Activated CD4-positive, alpha-beta T cell treated with anti-CD3 and anti-CD28 coated beads, Interleukin-2, amount 10 ng/mL, durations not matched to agents 24 days and 14 days (primary cell): ENCODE measurements at regions of chr4 and their contacts with region 1.

Region 1: DNA sequence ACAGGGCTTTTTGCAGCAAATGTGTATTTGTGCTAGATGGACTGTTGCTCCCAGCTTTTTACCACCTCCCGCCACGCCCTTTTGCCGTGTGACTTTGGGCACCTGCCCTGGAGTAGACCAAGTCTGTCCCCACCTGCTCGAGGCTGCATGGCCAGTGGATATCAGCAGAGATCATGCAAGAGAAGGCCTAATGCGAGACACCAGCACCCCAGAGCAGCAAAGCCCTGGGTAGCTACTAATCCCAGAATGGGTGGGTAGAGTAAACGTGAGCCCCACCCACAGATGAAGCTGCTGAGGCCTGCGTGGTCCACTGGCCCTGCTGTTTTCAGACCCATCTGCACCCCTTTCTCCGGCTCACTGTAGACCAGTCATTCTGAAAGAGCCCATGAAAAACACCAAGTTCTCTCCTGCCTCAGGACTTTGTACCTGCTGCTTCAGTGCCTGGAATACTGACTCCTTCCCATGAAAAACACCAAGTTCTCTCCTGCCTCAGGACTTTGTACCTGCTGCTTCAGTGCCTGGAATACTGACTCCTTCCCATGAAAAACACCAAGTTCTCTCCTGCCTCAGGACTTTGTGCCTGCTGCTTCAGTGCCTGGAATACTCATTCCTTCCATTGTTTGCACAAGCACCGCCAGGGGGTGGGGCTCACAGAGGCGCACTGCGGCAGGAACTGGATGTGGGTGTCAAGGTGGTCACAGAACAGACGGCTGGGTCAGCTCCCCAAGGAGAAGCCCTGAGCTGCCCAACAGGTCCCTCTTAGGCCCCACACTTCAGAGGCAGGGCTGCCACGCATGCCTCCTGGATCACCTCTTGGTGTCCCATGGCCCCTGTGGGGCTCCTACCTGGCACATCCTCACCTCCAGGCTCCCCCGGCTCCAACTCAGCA is 5.1 kb upstream of the TNIP2 start:
- DNase-seq: peak; percentile 69
- H3K4me3 Mint-ChIP-seq: no peak overlapping the region
- H3K27ac Mint-ChIP-seq: peak overlapping the region; percentile 67
- H3K4me1 Mint-ChIP-seq: peaks cover 11% of the 10 kb centered on the region
- H3K27me3 Mint-ChIP-seq: no peaks in the 10 kb centered on the region

Region 2: GRCh38 chr4:2811830-2812611 is 50.7 kb after region 1 on chr4:
- intact Hi-C with region 1: loop called (anchors 2 kb)
- DNase-seq: peak; percentile 90
- H3K4me3 Mint-ChIP-seq: peak overlapping the region; percentile 89
- H3K27ac Mint-ChIP-seq: peak overlapping the region; percentile 96
- H3K4me1 Mint-ChIP-seq: peaks cover 52% of the 10 kb centered on the region
- H3K27me3 Mint-ChIP-seq: no peaks in the 10 kb centered on the region

Region 3: DNA sequence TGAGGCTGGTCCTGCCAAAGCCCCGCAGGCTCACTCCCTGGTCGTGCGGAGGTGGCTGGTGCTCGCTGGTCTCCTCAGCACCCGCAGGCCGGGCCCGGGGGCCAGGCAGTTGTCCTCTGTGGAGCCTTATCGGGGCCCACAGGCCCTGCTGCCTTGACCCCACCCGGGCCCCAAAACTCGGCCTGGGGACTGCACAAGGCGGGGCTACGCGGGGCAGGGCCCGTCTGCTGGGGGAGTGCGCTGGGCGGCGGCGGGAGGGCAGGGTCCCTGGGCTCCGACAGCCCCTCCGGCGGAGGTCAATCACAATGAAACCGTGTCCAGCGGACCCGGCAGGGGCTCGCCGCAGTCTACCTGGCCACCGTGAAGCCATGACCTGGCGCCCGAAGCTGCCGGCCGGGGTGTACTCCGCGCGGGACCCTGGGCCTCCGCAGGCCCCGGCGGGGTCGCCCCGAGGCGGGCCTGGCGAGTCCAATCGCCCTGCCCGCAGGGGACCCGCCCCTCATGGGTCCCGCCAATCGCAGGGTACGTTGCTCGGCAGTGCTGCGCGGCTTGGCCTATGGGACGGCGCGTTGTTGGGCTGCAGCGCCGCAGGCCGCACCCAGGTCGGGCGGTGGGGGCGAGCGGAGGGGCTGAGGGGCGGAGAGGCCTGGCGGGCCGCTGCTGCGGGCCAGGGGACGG is 82.1 kb after region 1 on chr4 and contains the start of gene ADD1:
- intact Hi-C with region 1: loop called (anchors 5 kb)
- DNase-seq: peak; percentile 100
- H3K4me3 Mint-ChIP-seq: peak within 1 kb of the TSS; percentile 91
- H3K27ac Mint-ChIP-seq: peak within 1 kb of the TSS; percentile 92
- H3K4me1 Mint-ChIP-seq: peaks cover 41% of the 10 kb centered on the region
- H3K27me3 Mint-ChIP-seq: no peaks in the 10 kb centered on the region
- total RNA-seq, gene ADD1: 187 and 198 TPM in 2 replicates

Region 4: GRCh38 chr4:3037957-3038461 is 276.7 kb after region 1 on chr4:
- intact Hi-C with region 1: loop called (anchors 1 kb)
- DNase-seq: peak; percentile 73
- H3K4me3 Mint-ChIP-seq: peak overlapping the region; percentile 74
- H3K27ac Mint-ChIP-seq: peak overlapping the region; percentile 58
- H3K4me1 Mint-ChIP-seq: peaks cover 37% of the 10 kb centered on the region
- H3K27me3 Mint-ChIP-seq: peaks cover 10% of the 10 kb centered on the region